ENCODE measurements at regions of chr3 and their contacts with region 1.

Region 1: GRCh38 chr3:147616998-147617619 is 207.9 kb downstream of the ZIC1 start:
- DNase-seq: peak; percentile 37
- H3K4me3 Mint-ChIP-seq: no peak overlapping the region
- H3K27ac Mint-ChIP-seq: no peak overlapping the region
- H3K4me1 Mint-ChIP-seq: no peaks in the 10 kb centered on the region
- H3K27me3 Mint-ChIP-seq: peaks cover 26% of the 10 kb centered on the region
- CTCF ChIP-seq: peak; percentile 33

Region 2: DNA sequence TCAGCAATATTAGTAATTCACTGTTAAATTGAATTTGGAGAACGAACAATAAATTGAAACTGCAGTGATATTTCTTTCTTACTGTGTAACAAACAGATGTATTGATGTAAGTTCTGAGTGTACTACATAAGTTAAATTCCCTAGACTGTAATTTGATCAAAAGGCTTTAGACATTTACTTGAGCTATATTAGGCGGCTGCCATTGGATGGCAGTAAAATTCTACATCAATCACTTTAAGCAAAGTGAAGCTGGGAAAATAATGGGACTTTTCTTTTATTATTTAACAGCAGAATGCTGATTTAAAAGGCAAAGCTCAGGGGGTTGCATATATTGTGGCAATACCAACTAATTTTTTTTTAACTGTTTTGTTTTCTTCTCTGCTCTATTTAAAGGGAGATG is 799.4 kb before region 1 on chr3:
- CTCF ChIA-PET with region 1: no interaction called
- POLR2A ChIA-PET with region 1: no interaction called
- intact Hi-C with region 1: loop called (anchors 10 kb)
- DNase-seq: peak; percentile 15
- H3K4me3 Mint-ChIP-seq: no peak overlapping the region
- H3K27ac Mint-ChIP-seq: no peak overlapping the region
- H3K4me1 Mint-ChIP-seq: no peaks in the 10 kb centered on the region
- H3K27me3 Mint-ChIP-seq: peaks cover 95% of the 10 kb centered on the region
- CTCF ChIP-seq: peak; percentile 31

Region 3: GRCh38 chr3:147361454-147362420 is 255.4 kb before region 1 on chr3:
- CTCF ChIA-PET with region 1: no interaction called
- POLR2A ChIA-PET with region 1: no interaction called
- intact Hi-C with region 1: loop called (anchors 10 kb)
- DNase-seq: peak; percentile 68
- H3K4me3 Mint-ChIP-seq: no peak overlapping the region
- H3K27ac Mint-ChIP-seq: no peak overlapping the region
- H3K4me1 Mint-ChIP-seq: no peaks in the 10 kb centered on the region
- H3K27me3 Mint-ChIP-seq: peaks cover 87% of the 10 kb centered on the region
- CTCF ChIP-seq: peak; percentile 47